ENCODE measurements at regions of chr12 and their contacts with region 1.

Region 1: DNA sequence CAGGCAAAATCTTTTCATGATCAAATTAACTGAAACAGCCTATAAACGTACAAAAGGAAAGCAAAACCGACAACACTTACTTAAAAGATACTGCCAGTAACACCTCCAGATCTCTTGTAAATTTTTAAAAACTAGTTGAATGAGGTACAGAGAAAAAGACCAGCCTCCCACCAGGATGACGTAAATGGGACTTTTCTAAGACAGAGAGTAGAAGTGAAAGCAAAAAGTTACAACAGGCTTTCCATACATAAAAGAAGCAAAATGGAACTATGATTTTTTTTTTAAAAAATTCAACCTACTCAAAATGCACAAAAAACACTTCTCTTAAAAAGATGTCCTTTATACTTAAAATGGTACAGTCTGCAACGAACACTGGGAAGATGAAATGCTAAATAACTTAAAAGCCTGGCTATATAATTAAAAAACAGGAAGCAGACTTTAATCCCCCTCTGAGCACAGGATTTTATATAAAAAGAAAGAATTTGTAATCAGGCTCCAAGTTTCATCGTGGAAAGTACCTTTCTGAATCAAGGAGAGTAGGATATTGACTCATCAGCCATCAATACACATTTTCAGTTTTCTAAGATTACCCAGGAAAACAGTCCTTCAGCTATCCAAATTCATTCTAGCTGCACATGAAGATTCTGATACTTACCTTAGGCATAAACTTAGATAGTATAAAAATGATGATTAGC is 14.2 kb upstream of the MYO1A start:
- DNase-seq: no peak
- ATAC-seq: no peak
- H3K4me3 ChIP-seq: no peak overlapping the region
- H3K27ac ChIP-seq: no peak overlapping the region
- H3K4me1 ChIP-seq: no peaks in the 10 kb centered on the region
- H3K27me3 ChIP-seq: no peaks in the 10 kb centered on the region

Region 2: GRCh38 chr12:57005980-57006808 is 57.9 kb before region 1 on chr12 and contains the start of gene ZBTB39:
- intact Hi-C with region 1: loop called in 1 of 2 experiments (anchors 5 kb)
- DNase-seq: peak; percentile 62 to 86
- ATAC-seq: peak; percentile 80
- H3K4me3 ChIP-seq: peak within 1 kb of the TSS; percentile 83 to 96
- H3K27ac ChIP-seq: peak within 1 kb of the TSS in 1 of 2 donors; percentile 8
- H3K4me1 ChIP-seq: no peaks in the 10 kb centered on the region
- H3K27me3 ChIP-seq: no peaks in the 10 kb centered on the region
- total RNA-seq, gene ZBTB39: 6.5 to 6.8 TPM